Activated CD4-positive, alpha-beta T cell treated with anti-CD3 and anti-CD28 coated beads, Interleukin-2, amount 10 ng/mL, durations not matched to agents 24 days and 14 days (primary cell): ENCODE measurements at regions of chr1 and their contacts with region 1.

Region 1: GRCh38 chr1:153633716-153634665 is at the start of gene CHTOP:
- DNase-seq: peak; percentile 99
- H3K4me3 Mint-ChIP-seq: peak within 1 kb of the TSS; percentile 91
- H3K27ac Mint-ChIP-seq: peak within 1 kb of the TSS; percentile 100
- H3K4me1 Mint-ChIP-seq: peaks cover 34% of the 10 kb centered on the region
- H3K27me3 Mint-ChIP-seq: no peaks in the 10 kb centered on the region
- total RNA-seq, gene CHTOP: 110 and 114 TPM in 2 replicates

Region 2: GRCh38 chr1:153288634-153289275 is 345.2 kb before region 1 on chr1:
- intact Hi-C with region 1: no loop called
- DNase-seq: peak; percentile 70
- H3K4me3 Mint-ChIP-seq: no peak overlapping the region
- H3K27ac Mint-ChIP-seq: no peak overlapping the region
- H3K4me1 Mint-ChIP-seq: peaks cover 3% of the 10 kb centered on the region
- H3K27me3 Mint-ChIP-seq: peaks cover 2% of the 10 kb centered on the region

Region 3: DNA sequence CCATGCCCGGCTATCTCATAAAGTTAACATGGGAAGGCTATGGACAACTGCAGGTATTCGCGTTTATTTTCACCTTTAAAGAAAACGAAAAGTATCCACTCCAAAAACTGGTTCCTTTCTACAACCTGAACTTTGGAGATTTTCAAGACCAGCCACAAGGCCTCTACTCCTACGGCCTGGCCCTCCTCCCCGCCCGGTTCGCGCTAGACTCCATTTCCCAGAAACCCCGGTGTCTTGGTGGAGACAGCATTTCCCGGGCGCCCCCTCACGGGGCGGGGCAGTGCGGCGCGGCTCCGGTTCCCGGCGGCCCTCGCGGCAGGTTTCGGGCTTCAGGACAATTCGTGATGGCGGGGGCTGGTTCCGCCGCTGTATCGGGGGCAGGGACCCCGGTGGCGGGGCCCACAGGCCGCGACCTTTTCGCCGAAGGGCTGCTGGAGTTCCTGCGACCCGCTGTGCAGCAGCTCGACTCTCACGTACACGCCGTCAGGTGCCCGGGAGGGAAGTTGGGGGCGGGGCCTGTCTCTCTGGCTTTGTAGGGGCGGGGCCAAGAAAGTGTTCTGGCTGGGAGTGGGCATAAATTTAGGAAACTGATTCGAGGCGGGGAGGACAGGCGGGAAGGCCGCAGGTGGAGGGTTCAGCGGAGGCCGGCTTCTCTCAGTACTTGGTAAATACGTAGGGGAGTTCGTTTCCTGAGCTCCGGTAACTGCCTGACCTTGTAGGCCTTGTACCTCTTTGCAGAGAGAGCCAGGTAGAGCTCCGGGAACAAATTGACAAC is 24.6 kb after region 1 on chr1 and contains the start of gene SNAPIN:
- intact Hi-C with region 1: loop called (anchors 1 kb)
- DNase-seq: peak; percentile 98
- H3K4me3 Mint-ChIP-seq: peak within 1 kb of the TSS; percentile 98
- H3K27ac Mint-ChIP-seq: peak within 1 kb of the TSS; percentile 89
- H3K4me1 Mint-ChIP-seq: peaks cover 13% of the 10 kb centered on the region
- H3K27me3 Mint-ChIP-seq: no peaks in the 10 kb centered on the region
- total RNA-seq, gene SNAPIN: 28.6 and 31.6 TPM in 2 replicates

Region 4: DNA sequence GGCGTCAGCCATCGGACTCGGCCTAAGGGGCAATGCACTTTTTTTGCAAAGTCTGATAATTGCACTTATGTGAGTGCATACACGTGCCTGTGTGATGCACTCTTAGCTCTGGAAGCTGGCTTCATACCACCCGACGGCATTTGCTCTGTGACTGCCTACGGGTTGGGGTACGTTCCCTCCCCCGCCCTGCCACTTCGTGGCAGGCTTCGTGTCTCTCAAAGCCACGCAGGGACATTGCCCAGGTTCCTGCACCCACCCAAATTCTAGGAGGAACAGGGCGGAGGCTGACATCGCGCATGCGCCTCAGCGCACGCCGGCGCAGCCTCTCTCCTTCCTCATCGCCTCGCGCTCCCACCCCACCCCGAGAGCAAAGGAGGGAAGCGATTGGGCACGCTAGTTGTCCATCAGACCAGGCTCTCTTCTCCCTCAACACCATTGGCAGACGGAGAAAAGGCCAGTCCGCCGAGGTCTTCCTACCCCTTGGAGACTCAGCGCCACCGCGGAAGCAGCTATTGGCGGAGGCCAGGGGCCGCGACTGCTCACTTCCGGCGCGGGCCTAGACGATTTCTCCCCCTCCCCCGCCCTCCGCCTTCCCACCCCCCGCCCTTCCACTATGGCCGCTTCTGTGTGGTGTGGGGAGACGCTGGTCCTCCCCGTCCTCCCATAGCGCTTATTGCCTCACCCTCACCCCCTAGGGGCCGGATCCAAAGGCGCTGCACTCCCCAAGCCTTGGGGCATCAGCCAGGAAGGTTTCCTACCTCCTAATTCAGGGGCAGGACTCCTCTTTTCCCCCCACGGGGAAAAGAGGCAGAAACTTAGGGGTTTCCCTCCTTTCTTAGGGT is 93.7 kb after region 1 on chr1 and contains the start of gene INTS3:
- intact Hi-C with region 1: loop called (anchors 1 kb)
- DNase-seq: peak; percentile 100
- H3K4me3 Mint-ChIP-seq: peak within 1 kb of the TSS; percentile 96
- H3K27ac Mint-ChIP-seq: peak within 1 kb of the TSS; percentile 97
- H3K4me1 Mint-ChIP-seq: peaks cover 32% of the 10 kb centered on the region
- H3K27me3 Mint-ChIP-seq: no peaks in the 10 kb centered on the region
- total RNA-seq, gene INTS3: 63.1 and 64.8 TPM in 2 replicates